HepG2 (cell line): ENCODE measurements at regions of chr6 and their contacts with region 1.

Region 1: DNA sequence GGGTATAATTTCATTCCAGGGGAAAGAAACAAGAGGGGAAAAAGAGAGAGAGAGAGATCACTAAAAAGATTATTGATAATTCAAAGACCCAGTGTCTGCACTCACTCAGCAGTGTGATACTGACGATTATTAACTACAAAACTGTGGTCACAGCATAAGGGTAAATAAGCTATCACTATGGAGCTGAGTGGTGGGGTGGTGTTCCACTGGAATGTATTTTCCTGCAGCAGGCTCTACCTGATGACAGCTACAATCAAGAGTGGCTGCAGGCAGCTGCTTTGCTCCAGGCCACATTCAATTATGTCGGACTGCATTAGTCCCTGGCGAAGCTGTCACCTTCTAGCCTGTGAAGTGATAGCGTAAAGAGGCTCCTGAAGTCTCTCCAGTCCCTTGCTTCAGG is 122.2 kb upstream of the TFAP2D start:
- DNase-seq: no peak
- ATAC-seq: no peak
- H3K4me3 ChIP-seq: no peak overlapping the region
- H3K27ac ChIP-seq: no peak overlapping the region
- H3K4me1 ChIP-seq: no peaks in the 10 kb centered on the region
- H3K27me3 ChIP-seq: no peaks in the 10 kb centered on the region
- CTCF ChIP-seq: no peak
- EP300 ChIP-seq: no peak
- POLR2A ChIP-seq: no peak
- RAD21 ChIP-seq: no peak

Region 2: GRCh38 chr6:50264995-50265571 is 326.1 kb before region 1 on chr6:
- CTCF ChIA-PET with region 1: no interaction called
- POLR2A ChIA-PET with region 1: no interaction called
- in situ Hi-C with region 1: loop called (anchors 10 kb)
- intact Hi-C with region 1: no loop called
- DNase-seq: peak; percentile 9
- ATAC-seq: peak; percentile 78
- H3K4me3 ChIP-seq: no peak overlapping the region
- H3K27ac ChIP-seq: no peak overlapping the region
- H3K4me1 ChIP-seq: no peaks in the 10 kb centered on the region
- H3K27me3 ChIP-seq: no peaks in the 10 kb centered on the region
- CTCF ChIP-seq: peak; percentile 53
- EP300 ChIP-seq: no peak
- POLR2A ChIP-seq: no peak
- RAD21 ChIP-seq: no peak; the same call in 1 of the 2 replicates

Region 3: GRCh38 chr6:50427267-50427666 is 163.9 kb before region 1 on chr6:
- CTCF ChIA-PET with region 1: no interaction called
- POLR2A ChIA-PET with region 1: no interaction called
- in situ Hi-C with region 1: no loop called
- intact Hi-C with region 1: no loop called
- DNase-seq: no peak
- ATAC-seq: no peak
- H3K4me3 ChIP-seq: no peak overlapping the region
- H3K27ac ChIP-seq: no peak overlapping the region
- H3K4me1 ChIP-seq: no peaks in the 10 kb centered on the region
- H3K27me3 ChIP-seq: no peaks in the 10 kb centered on the region
- CTCF ChIP-seq: no peak
- EP300 ChIP-seq: no peak
- POLR2A ChIP-seq: no peak
- RAD21 ChIP-seq: no peak

Region 4: DNA sequence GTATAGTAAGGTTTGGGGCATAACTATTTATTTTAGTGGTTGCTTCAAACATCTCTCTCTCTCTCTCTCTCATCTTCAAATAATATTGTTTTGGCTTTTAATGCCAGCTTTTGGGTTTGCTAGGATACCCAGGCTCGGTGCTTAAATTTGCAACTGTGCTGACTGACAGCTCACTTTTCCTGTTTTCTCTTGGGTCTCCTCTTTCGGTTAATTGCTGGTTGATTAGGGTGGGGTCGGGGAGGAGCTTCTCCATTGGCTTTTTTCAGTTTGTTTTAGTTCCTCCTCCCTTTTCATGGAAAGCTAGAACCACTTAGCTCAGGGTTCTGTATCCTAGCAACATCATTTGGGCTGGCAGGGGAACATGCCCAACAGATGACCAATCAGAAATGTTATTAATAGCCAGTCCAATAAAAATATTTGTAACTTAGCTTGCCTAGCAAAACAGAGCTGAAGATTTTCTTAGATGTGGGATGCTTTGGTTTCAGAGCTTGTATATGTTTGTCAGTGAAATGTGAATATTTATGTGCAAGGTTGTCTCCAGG is 238.8 kb after region 1 on chr6:
- CTCF ChIA-PET with region 1: no interaction called
- POLR2A ChIA-PET with region 1: no interaction called
- in situ Hi-C with region 1: no loop called
- intact Hi-C with region 1: no loop called
- DNase-seq: no peak
- ATAC-seq: no peak
- H3K4me3 ChIP-seq: no peak overlapping the region
- H3K27ac ChIP-seq: no peak overlapping the region
- H3K4me1 ChIP-seq: no peaks in the 10 kb centered on the region
- H3K27me3 ChIP-seq: peaks cover 0 to 10% of the 10 kb centered on the region in 2 experiments; a peak in 1 of 5 replicates
- CTCF ChIP-seq: no peak
- EP300 ChIP-seq: no peak
- POLR2A ChIP-seq: no peak
- RAD21 ChIP-seq: no peak

Region 5: DNA sequence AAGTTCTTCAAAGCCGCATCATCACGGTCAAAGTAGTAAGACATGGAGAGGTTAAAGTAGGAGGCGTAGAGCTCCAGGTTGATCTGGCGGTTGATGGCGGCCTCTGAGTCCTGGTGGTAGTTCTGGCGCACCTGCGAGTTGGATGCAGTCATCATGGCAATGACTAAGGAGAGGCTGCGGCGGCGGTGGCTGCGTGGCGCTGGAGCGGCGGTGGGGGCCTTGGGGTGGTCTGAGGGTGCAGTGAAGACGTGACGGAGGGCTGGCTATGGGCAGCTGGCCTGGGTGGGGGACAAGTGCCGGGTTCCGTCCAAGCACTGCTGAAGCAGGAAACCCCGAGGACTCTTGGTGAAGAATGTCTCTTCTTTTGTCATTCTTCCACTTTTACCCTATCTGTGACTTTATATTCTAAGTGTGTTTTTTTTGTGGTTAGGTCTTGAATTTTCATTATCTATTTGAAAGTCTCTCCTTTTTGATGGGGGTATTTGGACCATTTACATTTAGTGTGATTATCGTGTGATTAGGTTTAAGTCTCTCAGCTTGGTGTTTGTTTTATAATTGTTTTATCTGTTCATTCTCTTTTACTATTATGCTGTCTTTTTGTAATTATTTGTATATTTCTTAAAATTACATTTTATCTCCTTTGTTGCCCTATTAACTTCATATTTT is 322.1 kb after region 1 on chr6:
- CTCF ChIA-PET with region 1: no interaction called
- POLR2A ChIA-PET with region 1: no interaction called
- in situ Hi-C with region 1: no loop called
- intact Hi-C with region 1: no loop called
- DNase-seq: no peak
- ATAC-seq: no peak
- H3K4me3 ChIP-seq: no peak overlapping the region
- H3K27ac ChIP-seq: no peak overlapping the region
- H3K4me1 ChIP-seq: no peaks in the 10 kb centered on the region
- H3K27me3 ChIP-seq: no peaks in the 10 kb centered on the region
- CTCF ChIP-seq: no peak
- EP300 ChIP-seq: no peak
- POLR2A ChIP-seq: no peak
- RAD21 ChIP-seq: no peak